Activated B cell treated with CpG ODN at 0.5 μM for 24 hours (primary cell): ENCODE measurements at regions of chr1 and their contacts with region 1.

Region 1: DNA sequence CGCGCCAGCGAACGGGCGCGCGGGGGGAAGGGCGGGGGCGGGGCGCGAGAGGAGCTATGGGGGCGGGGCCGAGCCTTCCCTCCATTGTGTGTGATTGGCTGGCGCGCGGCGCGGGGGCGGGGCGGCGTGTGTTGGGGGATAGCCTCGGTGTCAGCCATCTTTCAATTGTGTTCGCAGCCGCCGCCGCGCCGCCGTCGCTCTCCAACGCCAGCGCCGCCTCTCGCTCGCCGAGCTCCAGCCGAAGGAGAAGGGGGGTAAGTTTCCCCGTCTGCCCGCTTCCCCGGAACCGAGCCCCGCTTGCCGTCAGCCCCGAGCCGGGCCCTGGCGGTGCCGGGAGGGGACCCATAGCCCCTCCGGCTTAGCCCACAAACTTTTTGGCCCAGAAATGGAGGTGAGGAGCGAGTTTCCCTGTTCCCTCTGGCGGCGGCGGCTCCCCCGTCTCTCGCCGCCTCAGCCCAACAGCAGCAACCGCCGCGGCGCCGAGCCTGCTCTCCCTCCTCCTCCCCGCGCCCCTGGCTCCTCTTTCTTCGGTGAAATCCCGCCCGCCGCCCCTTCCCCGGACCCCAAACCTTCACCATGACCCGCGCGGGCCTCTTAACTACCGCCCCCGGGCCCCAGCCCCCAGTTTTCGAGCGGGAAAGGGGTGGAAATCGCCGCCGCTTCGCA is at the start of gene H3-3A:
- DNase-seq: peak; percentile 96
- ATAC-seq: peak; percentile 79
- H3K4me3 Mint-ChIP-seq: peak within 1 kb of the TSS; percentile 100
- H3K27ac Mint-ChIP-seq: peak within 1 kb of the TSS; percentile 99
- H3K4me1 Mint-ChIP-seq: peaks cover 44% of the 10 kb centered on the region
- H3K27me3 Mint-ChIP-seq: no peaks in the 10 kb centered on the region
- CTCF ChIP-seq: no peak
- total RNA-seq, gene H3-3A: 600 and 642 TPM in 2 replicates

Region 2: GRCh38 chr1:225467193-225468020 is 595.3 kb before region 1 on chr1:
- CTCF ChIA-PET with region 1: no interaction called
- POLR2A ChIA-PET with region 1: interaction called, 14 read pairs
- intact Hi-C with region 1: loop called (anchors 2 kb)
- DNase-seq: peak; percentile 75
- ATAC-seq: peak; percentile 86
- H3K4me3 Mint-ChIP-seq: peak overlapping the region; percentile 90
- H3K27ac Mint-ChIP-seq: peak overlapping the region; percentile 98
- H3K4me1 Mint-ChIP-seq: peaks cover 40% of the 10 kb centered on the region
- H3K27me3 Mint-ChIP-seq: no peaks in the 10 kb centered on the region
- CTCF ChIP-seq: no peak

Region 3: GRCh38 chr1:225754940-225755641 is 307.6 kb before region 1 on chr1:
- CTCF ChIA-PET with region 1: no interaction called
- POLR2A ChIA-PET with region 1: no interaction called
- intact Hi-C with region 1: no loop called
- DNase-seq: no peak
- ATAC-seq: no peak
- H3K4me3 Mint-ChIP-seq: no peak overlapping the region
- H3K27ac Mint-ChIP-seq: no peak overlapping the region
- H3K4me1 Mint-ChIP-seq: no peaks in the 10 kb centered on the region
- H3K27me3 Mint-ChIP-seq: no peaks in the 10 kb centered on the region
- CTCF ChIP-seq: no peak

Region 4: DNA sequence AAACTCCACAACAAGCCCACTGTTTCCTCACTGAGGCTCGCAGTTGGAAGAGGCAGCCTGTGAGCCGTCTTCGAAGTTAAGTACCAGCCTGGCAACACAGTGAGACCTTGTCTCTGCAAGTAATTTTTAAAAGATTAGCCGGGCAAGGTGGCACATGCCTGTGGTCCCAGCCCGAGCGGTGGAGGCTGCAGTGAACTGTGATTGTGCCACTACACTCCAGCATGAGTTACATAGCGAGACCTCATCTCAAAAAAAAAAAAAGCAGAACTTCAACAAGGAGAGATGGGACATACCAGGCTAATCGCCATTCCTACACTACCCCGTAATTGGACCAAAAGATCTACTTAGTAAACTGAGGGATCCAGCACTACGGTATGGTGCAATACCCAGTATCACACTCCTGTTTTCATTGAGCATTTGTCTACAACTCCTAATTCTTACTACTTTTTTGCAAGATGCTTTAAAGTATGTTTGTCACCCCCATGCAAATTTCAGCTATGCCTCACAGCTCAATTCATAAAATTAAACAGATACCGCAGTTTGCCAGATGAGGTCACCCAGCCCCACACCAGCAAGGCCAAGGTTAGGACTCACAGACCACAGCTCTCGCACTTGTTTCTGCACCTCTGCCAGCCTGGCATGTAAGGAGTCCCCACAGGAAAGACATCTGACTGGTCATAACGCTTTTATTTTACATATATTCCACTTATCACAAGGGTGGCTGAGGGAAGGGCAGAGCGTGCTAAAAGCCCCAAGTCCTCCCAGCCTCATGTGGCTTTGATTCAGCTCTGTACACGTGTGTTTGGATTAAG is 84.5 kb before region 1 on chr1:
- CTCF ChIA-PET with region 1: interaction called, 29 read pairs
- POLR2A ChIA-PET with region 1: interaction called, 22 read pairs
- intact Hi-C with region 1: no loop called
- DNase-seq: no peak
- ATAC-seq: peak; percentile 79
- H3K4me3 Mint-ChIP-seq: peak overlapping the region; percentile 63
- H3K27ac Mint-ChIP-seq: peak overlapping the region; percentile 81
- H3K4me1 Mint-ChIP-seq: peaks cover 33% of the 10 kb centered on the region
- H3K27me3 Mint-ChIP-seq: no peaks in the 10 kb centered on the region
- CTCF ChIP-seq: no peak

Region 5: GRCh38 chr1:226034482-226034881 is 28.2 kb before region 1 on chr1:
- CTCF ChIA-PET with region 1: interaction called, 10 read pairs
- POLR2A ChIA-PET with region 1: interaction called, 102 read pairs
- intact Hi-C with region 1: loop called (anchors 1 kb)
- DNase-seq: no peak
- ATAC-seq: peak; percentile 55
- H3K4me3 Mint-ChIP-seq: no peak overlapping the region
- H3K27ac Mint-ChIP-seq: no peak overlapping the region
- H3K4me1 Mint-ChIP-seq: peaks cover 30% of the 10 kb centered on the region
- H3K27me3 Mint-ChIP-seq: no peaks in the 10 kb centered on the region
- CTCF ChIP-seq: no peak

Region 6: GRCh38 chr1:226109829-226110248 is 47.1 kb after region 1 on chr1:
- CTCF ChIA-PET with region 1: interaction called, 73 read pairs
- POLR2A ChIA-PET with region 1: interaction called, 124 read pairs
- intact Hi-C with region 1: loop called (anchors 1 kb)
- DNase-seq: peak; percentile 90
- ATAC-seq: peak; percentile 66
- H3K4me3 Mint-ChIP-seq: peak overlapping the region; percentile 91
- H3K27ac Mint-ChIP-seq: peak overlapping the region; percentile 93
- H3K4me1 Mint-ChIP-seq: peaks cover 42% of the 10 kb centered on the region
- H3K27me3 Mint-ChIP-seq: no peaks in the 10 kb centered on the region
- CTCF ChIP-seq: no peak

Region 7: DNA sequence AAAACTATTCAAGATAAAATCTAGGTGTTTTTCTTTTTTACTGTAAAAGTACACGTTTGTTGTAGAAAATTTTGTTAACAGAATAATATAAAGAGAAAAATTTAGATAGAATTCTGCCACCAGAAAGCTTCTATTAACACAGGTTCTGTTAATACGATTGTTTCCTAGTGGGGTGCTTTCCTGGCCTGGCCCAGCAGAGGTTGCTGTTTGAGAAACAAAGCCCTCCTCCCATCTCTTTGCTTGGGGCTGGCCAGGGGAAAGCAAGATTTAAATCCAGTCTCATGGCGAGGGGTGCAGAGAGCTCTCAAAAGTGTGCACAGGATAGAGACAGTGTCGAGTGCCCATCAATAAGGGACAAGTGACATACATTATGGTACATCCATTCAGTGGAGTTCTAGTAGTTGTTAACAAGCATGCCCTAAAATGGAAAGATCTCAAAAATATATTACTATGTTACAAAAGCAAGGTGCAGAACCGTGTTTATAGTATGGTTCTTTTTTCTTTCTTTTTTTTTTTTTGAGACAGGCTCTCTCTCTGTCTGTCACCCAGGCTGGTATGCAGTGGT is 138.4 kb after region 1 on chr1:
- CTCF ChIA-PET with region 1: interaction called, 18 read pairs
- POLR2A ChIA-PET with region 1: interaction called, 6 read pairs
- intact Hi-C with region 1: loop called (anchors 1 kb)
- DNase-seq: no peak
- ATAC-seq: no peak
- H3K4me3 Mint-ChIP-seq: no peak overlapping the region
- H3K27ac Mint-ChIP-seq: no peak overlapping the region
- H3K4me1 Mint-ChIP-seq: peaks cover 27% of the 10 kb centered on the region
- H3K27me3 Mint-ChIP-seq: peaks cover 2% of the 10 kb centered on the region
- CTCF ChIP-seq: no peak